Endothelial cell of umbilical vein (primary cell): ENCODE measurements at regions of chr9 and their contacts with region 1.

Region 1: GRCh38 chr9:109969011-109969410 is 189.0 kb downstream of the PALM2AKAP2 start:
- DNase-seq: peak; percentile 72
- H3K4me3 ChIP-seq: no peak overlapping the region
- H3K27ac ChIP-seq: peak overlapping the region; percentile 91
- H3K4me1 ChIP-seq: peaks cover 27% of the 10 kb centered on the region
- H3K27me3 ChIP-seq: no peaks in the 10 kb centered on the region
- CTCF ChIP-seq: peak; percentile 16 to 31
- POLR2A ChIP-seq: no peak

Region 2: DNA sequence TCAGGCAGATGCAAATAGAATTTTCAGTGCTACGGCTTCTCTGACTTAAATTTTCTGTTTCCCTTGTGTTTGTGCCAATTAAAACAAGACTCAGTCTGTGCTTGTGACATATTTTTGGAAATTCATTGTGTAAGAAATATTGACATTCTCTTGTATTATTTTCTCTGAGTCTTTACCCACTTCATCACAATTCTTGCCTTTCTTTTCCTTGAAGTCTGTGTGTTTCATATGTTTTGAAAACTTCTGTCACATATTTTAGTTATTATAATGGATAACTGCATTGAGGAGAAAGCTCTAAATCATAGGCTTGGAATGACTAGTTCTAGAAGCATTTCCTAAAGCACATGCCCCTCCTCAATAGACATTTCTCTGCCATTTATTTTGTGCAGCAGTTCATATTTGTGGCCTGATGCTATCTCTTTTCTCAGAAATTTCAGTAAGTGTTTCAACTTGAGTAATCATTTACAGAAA is 17.5 kb after region 1 on chr9:
- CTCF ChIA-PET with region 1: interaction called, 4 read pairs
- POLR2A ChIA-PET with region 1: no interaction called
- dilution Hi-C with region 1: no loop called
- intact Hi-C with region 1: loop called (anchors 1 kb)
- DNase-seq: peak; percentile 95
- H3K4me3 ChIP-seq: peak overlapping the region in 1 of 3 experiments; percentile 10
- H3K27ac ChIP-seq: peak overlapping the region; percentile 93
- H3K4me1 ChIP-seq: peaks cover 22% of the 10 kb centered on the region
- H3K27me3 ChIP-seq: no peaks in the 10 kb centered on the region
- CTCF ChIP-seq: no peak
- POLR2A ChIP-seq: no peak

Region 3: DNA sequence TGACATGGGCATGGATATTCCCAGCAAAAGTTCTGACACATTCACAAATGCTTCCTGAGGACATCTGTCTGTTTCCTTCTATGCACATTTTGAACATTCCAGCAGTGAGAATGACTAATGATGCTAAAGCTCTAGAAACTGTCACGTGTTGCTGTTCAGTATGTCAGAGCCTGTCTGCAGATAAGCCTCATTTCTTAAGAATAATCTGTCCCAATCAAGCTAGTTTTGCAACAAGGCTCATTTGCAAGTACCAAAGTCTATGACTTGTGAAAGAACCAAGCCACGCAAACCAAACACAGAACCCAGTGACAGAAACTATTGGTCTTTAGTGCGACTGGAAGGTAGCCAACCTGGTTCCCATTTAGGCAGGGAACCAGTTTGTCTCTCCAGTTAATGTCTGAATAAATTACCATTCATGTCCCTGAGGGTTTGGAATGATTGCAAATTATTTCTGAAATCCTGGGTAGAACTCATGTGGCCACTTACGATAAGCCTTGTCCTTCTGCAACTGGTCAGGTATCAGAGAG is 60.5 kb after region 1 on chr9:
- CTCF ChIA-PET with region 1: no interaction called
- POLR2A ChIA-PET with region 1: no interaction called
- dilution Hi-C with region 1: no loop called
- intact Hi-C with region 1: loop called (anchors 1 kb)
- DNase-seq: peak; percentile 91
- H3K4me3 ChIP-seq: peak overlapping the region in 1 of 3 experiments; percentile 1
- H3K27ac ChIP-seq: peak overlapping the region; percentile 97
- H3K4me1 ChIP-seq: peaks cover 57% of the 10 kb centered on the region
- H3K27me3 ChIP-seq: no peaks in the 10 kb centered on the region
- CTCF ChIP-seq: no peak
- POLR2A ChIP-seq: peak; percentile 63

Region 4: GRCh38 chr9:110058304-110058953 is 89.4 kb after region 1 on chr9:
- CTCF ChIA-PET with region 1: interaction called, 5 read pairs
- POLR2A ChIA-PET with region 1: no interaction called
- dilution Hi-C with region 1: no loop called
- intact Hi-C with region 1: loop called (anchors 2 kb)
- DNase-seq: peak; percentile 82
- H3K4me3 ChIP-seq: no peak overlapping the region
- H3K27ac ChIP-seq: peak overlapping the region; percentile 30
- H3K4me1 ChIP-seq: peaks cover 30% of the 10 kb centered on the region
- H3K27me3 ChIP-seq: no peaks in the 10 kb centered on the region
- CTCF ChIP-seq: peak; percentile 37 to 46
- POLR2A ChIP-seq: peak; percentile 31

Region 5: GRCh38 chr9:110125207-110125751 is 156.3 kb after region 1 on chr9:
- CTCF ChIA-PET with region 1: no interaction called
- POLR2A ChIA-PET with region 1: no interaction called
- dilution Hi-C with region 1: no loop called
- intact Hi-C with region 1: no loop called
- DNase-seq: peak; percentile 81
- H3K4me3 ChIP-seq: no peak overlapping the region
- H3K27ac ChIP-seq: peak overlapping the region; percentile 79
- H3K4me1 ChIP-seq: peaks cover 60% of the 10 kb centered on the region
- H3K27me3 ChIP-seq: no peaks in the 10 kb centered on the region
- CTCF ChIP-seq: no peak
- POLR2A ChIP-seq: no peak

Region 6: DNA sequence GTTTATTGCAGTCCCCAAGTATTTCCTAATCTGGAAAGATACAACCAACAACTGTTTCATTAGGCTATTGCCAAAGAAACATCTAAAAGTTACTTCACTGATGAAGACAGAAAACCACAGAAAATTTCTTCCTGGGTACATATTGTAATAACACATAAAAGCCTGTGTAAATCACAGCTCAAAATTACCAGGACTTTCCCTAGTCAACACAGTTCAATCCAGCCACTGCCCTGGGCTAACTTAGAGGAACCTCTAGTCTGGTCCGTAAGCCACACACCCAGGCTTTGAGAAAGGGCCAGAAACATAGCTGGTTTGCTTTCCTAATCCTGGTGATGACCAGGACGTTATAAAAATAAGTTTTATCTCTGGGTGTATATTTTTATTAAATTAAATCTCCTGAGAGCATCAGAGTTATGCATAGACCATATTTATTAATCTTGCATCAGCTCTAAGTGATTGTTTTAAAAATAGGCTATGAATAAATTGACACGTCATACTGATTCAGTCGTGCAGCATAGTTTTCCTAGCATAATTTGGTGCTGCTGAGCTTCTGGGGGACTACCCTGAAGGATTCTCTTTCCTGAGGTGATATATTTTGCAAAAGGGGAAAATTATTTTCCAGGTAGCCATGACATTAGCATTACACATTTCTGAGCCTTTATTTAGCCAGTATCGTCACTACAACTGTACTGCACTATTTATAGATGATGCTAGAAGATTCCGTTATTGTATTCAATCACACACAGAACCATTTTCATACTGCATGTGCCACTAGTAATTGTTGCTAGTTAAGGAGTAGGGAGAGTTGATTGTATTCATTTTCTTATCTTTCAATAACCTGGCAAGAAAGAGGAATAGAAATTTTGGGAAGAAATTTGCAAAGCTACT is 687.0 kb after region 1 on chr9:
- CTCF ChIA-PET with region 1: no interaction called
- POLR2A ChIA-PET with region 1: no interaction called
- dilution Hi-C with region 1: no loop called
- intact Hi-C with region 1: no loop called
- DNase-seq: no peak
- H3K4me3 ChIP-seq: no peak overlapping the region
- H3K27ac ChIP-seq: no peak overlapping the region
- H3K4me1 ChIP-seq: peaks cover 3% of the 10 kb centered on the region
- H3K27me3 ChIP-seq: no peaks in the 10 kb centered on the region
- CTCF ChIP-seq: no peak
- POLR2A ChIP-seq: no peak